A549 (cell line): ENCODE measurements at regions of chr16 and their contacts with region 1.

Region 1: DNA sequence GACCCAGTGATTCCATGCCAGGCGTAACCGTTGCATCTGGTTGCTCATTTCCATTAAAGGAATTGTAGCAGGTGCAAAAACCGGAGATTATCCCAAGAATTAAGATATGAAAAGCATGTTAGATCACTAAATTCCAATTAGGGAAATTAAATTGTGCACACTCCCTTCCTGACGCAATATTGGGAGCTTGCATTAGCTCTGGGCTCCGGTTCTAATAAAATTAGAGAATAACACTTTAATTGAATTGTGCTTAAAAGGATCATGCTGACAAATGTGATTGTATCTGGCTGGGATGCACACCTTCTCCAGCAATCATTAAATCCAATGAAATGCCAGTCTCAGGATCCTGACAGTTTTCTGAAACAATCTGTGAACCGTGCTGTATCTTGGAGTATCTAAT is 38.1 kb downstream of the IRX5 start:
- DNase-seq: no peak
- ATAC-seq: no peak
- H3K4me3 ChIP-seq: no peak overlapping the region
- H3K27ac ChIP-seq: no peak overlapping the region
- H3K4me1 ChIP-seq: no peaks in the 10 kb centered on the region
- CTCF ChIP-seq: no peak
- EP300 ChIP-seq: no peak
- POLR2A ChIP-seq: no peak
- RAD21 ChIP-seq: no peak

Region 2: GRCh38 chr16:54957403-54958171 is 11.2 kb before region 1 on chr16:
- CTCF ChIA-PET with region 1: interaction called, 15 read pairs
- POLR2A ChIA-PET with region 1: no interaction called
- DNase-seq: peak; percentile 38 to 47
- ATAC-seq: no peak
- H3K4me3 ChIP-seq: no peak overlapping the region
- H3K27ac ChIP-seq: no peak overlapping the region
- H3K4me1 ChIP-seq: no peaks in the 10 kb centered on the region
- CTCF ChIP-seq: peak; percentile 56
- EP300 ChIP-seq: no peak
- POLR2A ChIP-seq: no peak
- RAD21 ChIP-seq: peak; percentile 58 to 71